K562 (cell line): ENCODE measurements at regions of chr10 and their contacts with region 1.

Region 1: DNA sequence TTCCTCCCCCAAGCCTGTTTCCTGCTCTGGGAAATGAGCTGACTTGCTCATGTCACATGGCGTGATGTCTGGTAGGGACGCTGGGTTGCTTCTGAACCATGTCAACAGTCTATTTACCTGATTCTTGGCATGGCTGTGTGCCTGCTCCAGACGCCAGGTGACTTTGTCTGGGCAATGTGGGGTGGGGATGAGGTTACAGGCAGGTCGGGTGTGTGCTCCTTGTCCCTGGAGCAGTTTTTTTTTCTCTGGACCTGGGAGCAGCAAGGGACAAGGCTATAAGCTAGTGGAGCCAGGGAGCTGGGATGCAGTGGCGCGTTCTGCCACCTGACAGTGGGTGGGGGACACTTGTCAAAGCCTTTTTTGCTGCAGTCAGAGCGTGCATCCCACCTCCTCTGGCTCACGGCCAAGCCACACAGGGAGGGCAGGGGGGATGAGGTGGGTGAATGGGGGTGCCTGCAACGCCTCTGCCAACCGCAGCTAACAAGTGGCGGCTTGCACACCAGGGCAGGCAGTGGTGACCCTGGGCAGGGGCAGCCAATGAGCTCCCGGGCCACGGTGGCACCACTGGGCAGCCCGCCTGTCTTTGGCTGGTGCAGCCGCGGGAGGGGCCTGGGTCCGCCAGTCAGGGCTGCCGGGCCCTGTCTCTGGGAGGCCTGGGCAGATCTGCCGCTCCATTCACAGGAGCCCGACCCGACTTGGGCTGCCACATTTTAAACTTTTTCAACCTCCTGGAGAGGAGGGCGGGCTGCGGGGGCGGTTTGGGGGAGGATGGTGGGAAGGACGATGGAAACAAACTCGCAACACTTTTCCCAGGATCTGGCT is 22.9 kb downstream of the DNAJB12 start:
- DNase-seq: peak in 1 of 4 experiments; percentile 26
- ATAC-seq: no peak
- H3K4me3 ChIP-seq: no peak overlapping the region
- H3K27ac ChIP-seq: no peak overlapping the region
- H3K4me1 ChIP-seq: peaks cover 18 to 44% of the 10 kb centered on the region in 2 experiments; a peak in 4 of 5 replicates
- H3K27me3 ChIP-seq: no peaks in the 10 kb centered on the region
- CTCF ChIP-seq: no peak
- EP300 ChIP-seq: no peak
- POLR2A ChIP-seq: peak; percentile 47
- RAD21 ChIP-seq: no peak

Region 2: DNA sequence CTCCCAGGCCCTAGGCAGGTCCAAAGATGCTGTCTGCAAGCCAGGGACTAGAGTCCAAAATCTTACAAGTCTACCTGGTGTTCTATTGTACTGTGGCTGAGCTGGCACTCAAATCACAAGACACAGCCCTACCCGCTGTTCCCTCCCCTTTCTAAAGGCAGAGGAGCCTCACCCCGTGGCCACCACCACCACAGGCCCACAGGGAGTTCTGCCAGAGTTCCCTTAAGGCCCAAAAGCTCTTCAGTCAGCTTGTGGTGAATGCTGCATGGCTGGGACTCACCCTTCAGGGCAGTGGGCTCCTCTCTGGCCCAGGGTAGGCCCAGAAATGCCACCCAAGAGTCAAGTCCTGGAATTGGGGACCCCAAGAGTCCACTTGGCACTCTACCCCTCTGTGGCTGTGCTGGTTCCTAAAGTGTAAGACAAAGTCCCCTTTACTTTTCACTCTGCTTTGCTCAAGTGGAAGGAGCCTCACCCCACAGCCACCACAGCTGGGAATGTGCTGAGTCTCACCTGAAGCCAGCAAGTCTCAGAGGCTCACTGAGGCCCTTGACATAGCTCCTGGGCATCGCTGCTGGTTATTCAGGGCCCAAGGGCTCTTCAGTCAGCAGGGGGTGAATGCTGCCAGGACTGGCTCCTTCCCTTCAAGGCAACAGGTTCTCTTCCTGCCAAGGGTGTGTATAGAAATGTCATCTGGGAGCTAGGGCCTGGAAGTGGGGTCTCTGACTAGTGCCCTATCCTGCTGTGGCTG is 432.0 kb before region 1 on chr10:
- CTCF ChIA-PET with region 1: interaction called, 55 read pairs
- POLR2A ChIA-PET with region 1: no interaction called
- in situ Hi-C with region 1: loop called (anchors 5 kb)
- intact Hi-C with region 1: loop called (anchors 1 kb)
- DNase-seq: no peak
- ATAC-seq: no peak
- H3K4me3 ChIP-seq: no peak overlapping the region
- H3K27ac ChIP-seq: no peak overlapping the region
- H3K4me1 ChIP-seq: peaks cover 0 to 3% of the 10 kb centered on the region in 2 experiments; a peak in 2 of 5 replicates
- H3K27me3 ChIP-seq: no peaks in the 10 kb centered on the region
- CTCF ChIP-seq: no peak
- EP300 ChIP-seq: no peak
- POLR2A ChIP-seq: no peak
- RAD21 ChIP-seq: no peak

Region 3: DNA sequence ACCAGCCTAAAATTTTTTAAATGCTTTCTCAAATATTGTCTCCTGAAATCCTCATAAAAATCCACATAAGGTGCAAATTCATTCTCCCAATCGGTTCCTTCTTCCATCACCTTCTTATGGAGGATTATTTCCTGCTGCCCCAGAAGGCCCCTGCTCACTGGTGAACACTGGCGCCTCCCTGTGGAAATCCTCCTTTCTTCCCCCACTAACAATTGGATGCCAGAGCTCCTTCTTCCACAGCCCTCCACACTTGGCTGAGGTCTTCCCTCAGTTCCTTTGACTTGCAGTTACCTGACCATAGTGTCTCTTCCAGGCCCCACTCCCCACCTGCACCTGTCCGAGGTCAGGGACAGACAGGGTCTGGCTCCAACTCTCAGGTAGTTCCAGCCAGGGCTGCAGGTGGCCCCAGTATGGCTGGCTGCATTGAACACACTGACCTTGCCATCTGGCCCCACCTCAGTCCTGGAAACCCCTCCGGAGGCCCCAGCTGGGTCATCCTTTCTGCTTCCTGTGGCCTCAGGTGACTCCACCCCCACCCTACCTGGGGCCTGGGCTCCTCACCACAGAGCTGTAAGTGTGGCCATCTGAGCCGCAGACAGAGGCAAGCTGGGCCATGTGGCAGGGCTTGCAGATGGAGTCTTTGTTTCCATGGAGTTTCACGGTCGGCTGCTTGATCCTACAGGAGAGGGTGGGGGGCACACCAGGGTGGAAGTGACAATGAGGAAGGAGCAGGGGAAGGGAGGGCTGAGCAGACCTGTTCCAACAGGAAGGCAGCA is 261.9 kb before region 1 on chr10:
- CTCF ChIA-PET with region 1: no interaction called
- POLR2A ChIA-PET with region 1: interaction called, 3 read pairs
- in situ Hi-C with region 1: loop called (anchors 10 kb)
- intact Hi-C with region 1: no loop called
- DNase-seq: peak in 2 of 4 experiments; percentile 49 to 55
- ATAC-seq: peak; percentile 70
- H3K4me3 ChIP-seq: no peak overlapping the region
- H3K27ac ChIP-seq: no peak overlapping the region
- H3K4me1 ChIP-seq: peaks cover 0 to 15% of the 10 kb centered on the region in 2 experiments; a peak in 2 of 5 replicates
- H3K27me3 ChIP-seq: peaks cover 10 to 38% of the 10 kb centered on the region in 2 experiments
- CTCF ChIP-seq: peak; percentile 64 to 68 (median 67)
- EP300 ChIP-seq: no peak
- POLR2A ChIP-seq: no peak
- RAD21 ChIP-seq: peak in 1 of 2 experiments; percentile 61; a peak in 2 of 4 replicates

Region 4: DNA sequence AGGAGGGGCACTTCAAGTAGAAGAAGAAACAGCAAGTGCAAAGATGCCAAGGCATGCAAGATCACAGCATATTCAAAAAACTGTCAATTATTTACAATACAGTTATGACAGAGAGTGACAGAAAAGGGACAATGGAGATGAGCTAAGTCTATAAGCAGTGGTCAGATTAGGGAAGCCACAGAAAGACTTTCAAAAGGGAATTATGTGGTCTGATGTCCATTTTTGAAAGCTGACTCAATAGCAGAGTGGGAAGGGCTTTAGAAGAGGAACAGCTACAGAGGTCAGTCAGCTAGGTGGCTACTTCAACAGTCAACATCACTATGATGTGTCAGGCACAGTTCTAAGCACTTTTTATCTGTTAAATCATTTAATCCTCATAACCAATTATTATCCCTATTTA is 198.3 kb before region 1 on chr10:
- CTCF ChIA-PET with region 1: interaction called, 3 read pairs
- POLR2A ChIA-PET with region 1: interaction called, 3 read pairs
- in situ Hi-C with region 1: loop called (anchors 10 kb)
- intact Hi-C with region 1: no loop called
- DNase-seq: peak in 1 of 4 experiments; percentile 16
- ATAC-seq: peak; percentile 65
- H3K4me3 ChIP-seq: no peak overlapping the region
- H3K27ac ChIP-seq: no peak overlapping the region
- H3K4me1 ChIP-seq: peaks cover 0 to 9% of the 10 kb centered on the region in 2 experiments; a peak in 2 of 5 replicates
- H3K27me3 ChIP-seq: no peaks in the 10 kb centered on the region
- CTCF ChIP-seq: no peak
- EP300 ChIP-seq: no peak
- POLR2A ChIP-seq: no peak
- RAD21 ChIP-seq: no peak

Region 5: GRCh38 chr10:72386916-72387586 is 55.2 kb after region 1 on chr10:
- CTCF ChIA-PET with region 1: no interaction called
- POLR2A ChIA-PET with region 1: no interaction called
- in situ Hi-C with region 1: no loop called
- intact Hi-C with region 1: no loop called
- DNase-seq: no peak
- ATAC-seq: peak; percentile 92
- H3K4me3 ChIP-seq: no peak overlapping the region
- H3K27ac ChIP-seq: no peak overlapping the region
- H3K4me1 ChIP-seq: peaks cover 0 to 12% of the 10 kb centered on the region in 2 experiments; a peak in 2 of 5 replicates
- H3K27me3 ChIP-seq: no peaks in the 10 kb centered on the region
- CTCF ChIP-seq: no peak
- EP300 ChIP-seq: peak; percentile 78; the same call in 1 of the 2 replicates
- POLR2A ChIP-seq: no peak
- RAD21 ChIP-seq: no peak